K562 (cell line): ENCODE measurements at regions of chr16 and their contacts with region 1.

Region 1: DNA sequence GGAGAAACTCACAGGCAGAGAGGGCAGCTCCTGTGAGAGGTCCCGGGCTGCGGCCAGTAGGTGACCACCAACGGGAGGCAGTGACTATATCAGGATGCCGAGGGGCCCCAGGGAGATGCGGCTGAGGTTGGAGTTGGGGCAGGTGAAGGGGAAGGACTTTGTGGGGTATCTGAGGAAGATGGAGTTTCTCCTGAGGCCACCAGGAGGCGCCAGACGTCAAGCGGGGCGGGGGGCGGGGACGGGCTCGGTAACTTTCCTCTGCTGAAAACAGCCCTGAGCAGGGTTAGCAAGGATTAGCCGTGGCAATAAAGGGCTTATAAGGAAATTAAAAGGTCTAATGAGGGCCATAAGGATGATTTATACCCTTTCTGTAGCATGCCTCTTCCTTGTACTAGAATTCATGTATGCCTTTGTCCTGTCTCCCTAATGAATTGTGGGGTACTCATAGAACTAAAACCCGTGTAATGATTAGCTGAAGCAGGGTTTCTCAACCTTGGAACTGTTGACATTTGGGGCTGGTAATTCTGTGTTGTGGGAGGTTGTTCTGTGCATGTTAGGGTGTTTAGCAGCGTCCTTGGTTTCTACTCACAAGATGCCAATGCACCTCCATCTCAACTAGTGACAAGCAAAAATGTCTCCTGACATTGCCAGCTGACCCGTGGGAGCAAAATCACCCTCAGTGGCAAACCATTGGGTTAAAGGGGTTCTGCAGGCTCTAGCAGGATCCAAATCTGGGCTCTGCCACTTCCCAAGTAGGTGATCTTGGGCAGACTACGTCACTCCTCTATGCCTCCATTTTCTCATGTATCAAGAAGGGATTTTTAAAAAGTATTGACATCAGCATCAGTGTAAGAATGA is 74.8 kb upstream of the GRIN2A start:
- DNase-seq: peak; percentile 66 to 88 (median 86)
- ATAC-seq: peak; percentile 87
- H3K4me3 ChIP-seq: no peak overlapping the region
- H3K27ac ChIP-seq: no peak overlapping the region
- H3K4me1 ChIP-seq: peaks cover 0 to 6% of the 10 kb centered on the region in 2 experiments; a peak in 3 of 5 replicates
- H3K27me3 ChIP-seq: peaks cover 9 to 12% of the 10 kb centered on the region in 2 experiments; a peak in 4 of 5 replicates
- CTCF ChIP-seq: peak; percentile 73 to 83 (median 82)
- EP300 ChIP-seq: no peak
- POLR2A ChIP-seq: no peak
- RAD21 ChIP-seq: peak; percentile 67 to 82

Region 2: GRCh38 chr16:10269632-10270031 is 12.6 kb after region 1 on chr16:
- CTCF ChIA-PET with region 1: no interaction called
- POLR2A ChIA-PET with region 1: no interaction called
- in situ Hi-C with region 1: no loop called
- intact Hi-C with region 1: no loop called
- DNase-seq: no peak
- ATAC-seq: no peak
- H3K4me3 ChIP-seq: no peak overlapping the region
- H3K27ac ChIP-seq: no peak overlapping the region
- H3K4me1 ChIP-seq: no peaks in the 10 kb centered on the region; a peak in 1 of 5 replicates
- H3K27me3 ChIP-seq: no peaks in the 10 kb centered on the region
- CTCF ChIP-seq: no peak
- EP300 ChIP-seq: no peak
- POLR2A ChIP-seq: no peak
- RAD21 ChIP-seq: no peak

Region 3: DNA sequence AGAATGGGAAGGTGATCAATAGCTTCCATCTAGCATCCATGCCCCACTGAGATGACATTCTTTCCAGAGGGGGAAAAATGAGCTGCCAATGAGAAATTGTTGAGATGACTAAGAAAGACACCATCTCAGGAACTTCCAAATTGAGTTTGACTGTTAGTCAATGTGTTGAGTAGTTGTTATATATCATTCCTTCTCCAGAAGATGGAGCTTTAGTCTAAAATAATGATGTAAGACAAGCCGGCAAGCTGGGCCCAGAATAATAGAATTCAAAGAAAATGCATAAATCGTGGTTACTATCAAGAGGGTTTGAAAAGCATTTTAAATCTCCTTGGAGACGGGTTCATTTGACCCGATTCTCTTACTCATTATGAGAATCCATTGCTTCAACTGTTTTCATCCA is 57.8 kb after region 1 on chr16:
- CTCF ChIA-PET with region 1: interaction called, 3 read pairs
- POLR2A ChIA-PET with region 1: no interaction called
- in situ Hi-C with region 1: no loop called
- intact Hi-C with region 1: loop called (anchors 2 kb)
- DNase-seq: peak in 1 of 4 experiments; percentile 42
- ATAC-seq: peak; percentile 79
- H3K4me3 ChIP-seq: no peak overlapping the region
- H3K27ac ChIP-seq: no peak overlapping the region
- H3K4me1 ChIP-seq: peaks cover 10 to 24% of the 10 kb centered on the region in 2 experiments
- H3K27me3 ChIP-seq: no peaks in the 10 kb centered on the region
- CTCF ChIP-seq: peak in 2 of 3 experiments; percentile 24 to 63; a peak in 3 of 6 replicates
- EP300 ChIP-seq: no peak
- POLR2A ChIP-seq: no peak
- RAD21 ChIP-seq: peak; percentile 67 to 91; a peak in 3 of 4 replicates

Region 4: GRCh38 chr16:10465821-10466220 is 208.8 kb after region 1 on chr16:
- CTCF ChIA-PET with region 1: no interaction called
- POLR2A ChIA-PET with region 1: no interaction called
- in situ Hi-C with region 1: no loop called
- intact Hi-C with region 1: no loop called
- DNase-seq: no peak
- ATAC-seq: no peak
- H3K4me3 ChIP-seq: no peak overlapping the region
- H3K27ac ChIP-seq: no peak overlapping the region
- H3K4me1 ChIP-seq: no peaks in the 10 kb centered on the region
- H3K27me3 ChIP-seq: no peaks in the 10 kb centered on the region
- CTCF ChIP-seq: no peak
- EP300 ChIP-seq: no peak
- POLR2A ChIP-seq: no peak
- RAD21 ChIP-seq: no peak

Region 5: GRCh38 chr16:10937068-10937859 is 680.3 kb after region 1 on chr16:
- CTCF ChIA-PET with region 1: no interaction called
- POLR2A ChIA-PET with region 1: no interaction called
- in situ Hi-C with region 1: loop called (anchors 10 kb)
- intact Hi-C with region 1: no loop called
- DNase-seq: no peak
- ATAC-seq: no peak
- H3K4me3 ChIP-seq: no peak overlapping the region
- H3K27ac ChIP-seq: no peak overlapping the region
- H3K4me1 ChIP-seq: peaks cover 28 to 41% of the 10 kb centered on the region in 2 experiments
- H3K27me3 ChIP-seq: no peaks in the 10 kb centered on the region
- CTCF ChIP-seq: no peak
- EP300 ChIP-seq: no peak
- POLR2A ChIP-seq: no peak
- RAD21 ChIP-seq: no peak